Endothelial cell of umbilical vein (primary cell): ENCODE measurements at regions of chr2 and their contacts with region 1.

Region 1: DNA sequence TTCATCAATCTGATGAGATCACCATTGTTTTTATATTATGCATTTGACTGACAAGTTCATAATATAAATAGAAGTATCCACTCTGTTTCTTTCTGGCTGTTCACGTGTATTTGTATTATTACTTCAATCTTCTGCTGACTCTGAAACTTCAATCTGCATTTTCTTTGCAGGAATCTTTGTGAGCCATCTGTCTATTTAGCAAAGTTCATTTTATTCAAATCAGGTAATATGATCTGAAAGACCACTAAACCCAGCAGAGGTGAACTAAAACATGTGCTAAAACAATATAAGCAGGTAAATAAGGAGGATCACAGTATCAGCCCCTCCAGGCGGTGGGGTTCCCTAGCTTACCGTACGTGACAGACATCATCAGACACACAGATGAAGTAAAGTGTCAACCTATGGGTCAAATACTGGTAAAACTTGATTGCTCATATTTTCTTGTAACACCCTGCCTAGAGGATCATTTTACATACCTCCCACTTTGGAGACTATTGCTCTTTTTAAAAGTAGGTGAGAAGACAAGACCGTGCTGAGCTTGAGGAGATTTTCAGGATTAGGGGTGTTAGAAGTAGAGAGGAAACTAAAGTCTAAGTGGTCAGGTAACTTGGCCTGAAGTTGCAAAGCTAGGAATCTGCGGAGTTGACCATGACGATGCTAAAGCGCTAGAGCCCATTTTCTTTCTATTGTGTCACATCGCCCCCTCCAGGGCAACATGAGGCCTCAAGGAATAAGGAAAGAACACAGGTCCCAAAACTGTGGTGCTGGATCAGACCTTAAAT is 9.0 kb downstream of the DTNB start:
- DNase-seq: peak; percentile 83
- H3K4me3 ChIP-seq: no peak overlapping the region
- H3K27ac ChIP-seq: no peak overlapping the region
- H3K4me1 ChIP-seq: peaks cover 4% of the 10 kb centered on the region
- H3K27me3 ChIP-seq: no peaks in the 10 kb centered on the region
- CTCF ChIP-seq: peak; percentile 77 to 79
- POLR2A ChIP-seq: no peak

Region 2: GRCh38 chr2:25521665-25522387 is 142.5 kb before region 1 on chr2:
- CTCF ChIA-PET with region 1: interaction called, 9 read pairs
- POLR2A ChIA-PET with region 1: no interaction called
- dilution Hi-C with region 1: no loop called
- intact Hi-C with region 1: loop called (anchors 1 kb)
- DNase-seq: peak; percentile 86
- H3K4me3 ChIP-seq: no peak overlapping the region
- H3K27ac ChIP-seq: no peak overlapping the region
- H3K4me1 ChIP-seq: peaks cover 7% of the 10 kb centered on the region
- H3K27me3 ChIP-seq: no peaks in the 10 kb centered on the region
- CTCF ChIP-seq: peak; percentile 55 to 61
- POLR2A ChIP-seq: no peak

Region 3: GRCh38 chr2:25606892-25607291 is 57.5 kb before region 1 on chr2:
- CTCF ChIA-PET with region 1: interaction called, 561 read pairs
- POLR2A ChIA-PET with region 1: no interaction called
- dilution Hi-C with region 1: no loop called
- intact Hi-C with region 1: loop called (anchors 1 kb)
- DNase-seq: peak; percentile 55
- H3K4me3 ChIP-seq: no peak overlapping the region
- H3K27ac ChIP-seq: no peak overlapping the region
- H3K4me1 ChIP-seq: peaks cover 2% of the 10 kb centered on the region
- H3K27me3 ChIP-seq: no peaks in the 10 kb centered on the region
- CTCF ChIP-seq: peak; percentile 23 to 40
- POLR2A ChIP-seq: no peak

Region 4: DNA sequence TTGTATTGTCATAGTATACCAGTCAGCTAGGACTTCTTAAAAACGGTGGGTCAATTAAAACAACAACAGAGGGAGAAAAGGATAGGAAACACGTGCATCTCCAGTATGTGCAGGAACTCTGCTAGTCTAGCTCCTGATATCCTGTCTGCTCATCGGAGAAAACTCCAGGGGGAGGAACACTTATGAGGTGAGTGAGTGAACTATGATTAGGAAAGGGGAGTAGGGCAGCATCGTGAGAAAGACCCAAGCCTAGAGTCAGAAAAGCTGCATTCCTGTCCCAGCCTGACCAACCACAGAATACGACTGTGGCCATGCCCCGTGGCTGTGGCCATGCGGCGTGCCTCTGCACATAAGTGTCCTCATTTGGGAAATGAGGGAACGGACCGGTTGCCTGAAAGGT is 25.2 kb before region 1 on chr2:
- CTCF ChIA-PET with region 1: interaction called, 14 read pairs
- POLR2A ChIA-PET with region 1: no interaction called
- dilution Hi-C with region 1: no loop called
- intact Hi-C with region 1: no loop called
- DNase-seq: peak; percentile 54
- H3K4me3 ChIP-seq: no peak overlapping the region
- H3K27ac ChIP-seq: no peak overlapping the region
- H3K4me1 ChIP-seq: peaks cover 4% of the 10 kb centered on the region
- H3K27me3 ChIP-seq: no peaks in the 10 kb centered on the region
- CTCF ChIP-seq: no peak
- POLR2A ChIP-seq: no peak

Region 5: GRCh38 chr2:25690058-25690457 is 25.7 kb after region 1 on chr2:
- CTCF ChIA-PET with region 1: interaction called, 15 read pairs
- POLR2A ChIA-PET with region 1: no interaction called
- dilution Hi-C with region 1: no loop called
- intact Hi-C with region 1: no loop called
- DNase-seq: no peak
- H3K4me3 ChIP-seq: no peak overlapping the region
- H3K27ac ChIP-seq: no peak overlapping the region
- H3K4me1 ChIP-seq: no peaks in the 10 kb centered on the region
- H3K27me3 ChIP-seq: peaks cover 3 to 4% of the 10 kb centered on the region in 2 experiments
- CTCF ChIP-seq: no peak
- POLR2A ChIP-seq: no peak